PC-9 (cell line): ENCODE measurements at regions of chr2 and their contacts with region 1.

Region 1: DNA sequence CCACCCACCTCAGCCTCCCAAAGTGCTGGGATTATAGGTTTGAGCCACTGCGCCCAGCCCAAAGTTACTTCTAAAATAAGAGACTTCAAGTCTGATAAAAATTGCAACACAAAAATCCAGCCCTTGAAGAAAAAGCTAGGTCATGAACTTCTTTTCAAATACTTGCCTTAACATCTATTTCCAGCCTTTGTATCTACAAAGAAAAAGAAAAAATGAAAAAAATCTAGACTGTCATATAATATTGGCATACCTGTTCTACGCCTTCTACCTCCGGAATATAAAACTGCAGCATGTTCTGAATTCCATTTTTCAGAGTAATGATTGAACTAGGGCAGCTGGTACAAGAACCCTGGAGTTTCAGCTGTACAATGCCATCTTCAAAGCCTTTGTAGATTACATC is 13.1 kb upstream of the GFPT1 start:
- DNase-seq: no peak
- H3K4me3 ChIP-seq: no peak overlapping the region
- H3K27ac ChIP-seq: no peak overlapping the region
- H3K4me1 ChIP-seq: no peaks in the 10 kb centered on the region
- H3K27me3 ChIP-seq: no peaks in the 10 kb centered on the region
- CTCF ChIP-seq: no peak

Region 2: DNA sequence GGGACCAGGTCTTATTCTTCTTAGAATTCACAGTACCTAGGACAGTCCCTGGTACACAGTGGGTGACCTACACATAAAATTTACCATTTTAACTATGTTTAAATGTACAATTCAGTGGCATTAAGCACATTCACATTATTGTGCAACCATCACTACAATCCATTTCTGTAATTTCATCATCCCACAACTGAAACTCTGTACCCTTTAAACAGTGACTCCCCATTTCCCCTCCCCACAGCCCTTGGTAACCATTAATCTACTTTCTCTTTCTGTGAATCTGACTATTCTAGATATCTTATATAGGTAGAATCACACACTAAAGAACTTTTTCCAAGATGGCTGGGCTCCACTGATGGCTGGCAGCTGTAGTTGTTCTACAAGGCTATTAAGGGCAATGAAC is 54.7 kb before region 1 on chr2:
- CTCF ChIA-PET with region 1: no interaction called
- POLR2A ChIA-PET with region 1: interaction called, 10 read pairs
- intact Hi-C with region 1: no loop called
- DNase-seq: no peak
- H3K4me3 ChIP-seq: no peak overlapping the region
- H3K27ac ChIP-seq: no peak overlapping the region
- H3K4me1 ChIP-seq: no peaks in the 10 kb centered on the region
- H3K27me3 ChIP-seq: no peaks in the 10 kb centered on the region
- CTCF ChIP-seq: no peak

Region 3: DNA sequence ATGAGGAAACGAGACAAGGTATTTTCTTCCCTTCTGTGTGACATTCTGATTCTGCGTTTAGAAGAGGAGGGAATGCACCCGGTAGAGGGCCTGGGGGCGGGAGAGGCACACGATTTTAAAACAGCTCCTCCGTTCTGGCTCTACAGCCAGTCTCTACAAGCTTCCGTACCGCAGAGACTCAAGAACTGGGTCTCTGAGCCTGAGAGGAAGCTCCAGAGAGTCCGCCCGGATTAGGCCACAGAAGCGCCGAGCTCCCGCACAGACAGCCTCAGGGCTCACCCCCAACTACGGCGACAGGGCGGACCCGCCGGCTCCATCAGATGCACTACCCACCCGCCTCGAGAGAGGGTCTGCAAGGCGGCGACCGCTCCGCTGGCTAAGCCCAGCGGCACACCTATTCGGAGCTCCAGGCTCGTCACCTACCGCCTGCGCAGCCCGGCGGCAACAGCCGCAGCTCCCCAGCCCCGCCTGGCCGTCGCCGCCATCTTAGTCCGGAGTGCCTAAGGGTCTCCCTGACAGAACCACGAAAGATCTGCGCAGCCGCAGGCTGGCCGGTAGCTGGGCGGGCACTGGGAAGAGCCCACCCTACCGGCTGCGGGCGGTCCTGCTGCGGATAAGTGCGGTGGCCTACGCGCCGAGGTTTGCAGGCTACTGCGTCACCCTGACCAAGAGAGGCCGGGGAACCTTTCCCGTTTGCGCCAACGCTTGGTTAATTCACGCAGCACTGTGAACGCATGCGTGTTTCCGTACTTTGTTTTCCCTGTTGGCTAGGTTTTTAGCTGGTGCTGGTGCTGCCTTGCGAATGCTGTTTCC is 37.0 kb after region 1 on chr2 and contains the start of gene NFU1:
- CTCF ChIA-PET with region 1: no interaction called
- POLR2A ChIA-PET with region 1: no interaction called
- intact Hi-C with region 1: no loop called
- DNase-seq: peak; percentile 77 to 88
- H3K4me3 ChIP-seq: peak within 1 kb of the TSS; percentile 80
- H3K27ac ChIP-seq: peak within 1 kb of the TSS; percentile 56
- H3K4me1 ChIP-seq: peaks cover 15% of the 10 kb centered on the region
- H3K27me3 ChIP-seq: no peaks in the 10 kb centered on the region
- CTCF ChIP-seq: peak; percentile 56; the same call in 1 of the 2 replicates
- total RNA-seq, gene NFU1: 29.3 and 35.1 TPM in 2 replicates